SK-N-SH (cell line): ENCODE measurements at regions of chr17 and their contacts with region 1.

Region 1: GRCh38 chr17:1965556-1966273 is 59.4 kb downstream of the RTN4RL1 start:
- DNase-seq: no peak
- H3K4me3 ChIP-seq: no peak overlapping the region
- H3K27ac ChIP-seq: no peak overlapping the region
- H3K4me1 ChIP-seq: peaks cover 0 to 14% of the 10 kb centered on the region in 2 experiments; a peak in 1 of 4 replicates
- H3K27me3 ChIP-seq: no peaks in the 10 kb centered on the region
- CTCF ChIP-seq: no peak
- EP300 ChIP-seq: no peak
- RAD21 ChIP-seq: no peak

Region 2: DNA sequence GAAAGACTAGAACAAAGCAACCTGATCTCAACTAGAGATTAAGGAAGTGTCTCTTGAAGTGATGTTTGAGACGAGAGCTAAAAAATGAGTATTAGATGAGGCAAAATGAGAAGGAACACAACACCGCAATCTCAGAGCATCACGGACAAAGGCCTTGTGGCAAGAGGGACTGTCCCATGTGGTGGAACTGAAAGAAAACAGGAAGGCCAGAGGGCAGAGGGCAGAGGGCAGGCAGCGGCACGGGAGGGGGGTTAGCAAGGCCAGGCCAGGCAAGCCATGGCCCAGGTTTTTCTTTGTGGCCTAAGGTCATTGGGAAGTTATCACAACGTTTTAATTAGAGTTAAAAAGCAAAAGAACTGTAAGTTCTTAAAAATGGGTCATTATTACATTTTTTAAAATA is 113.4 kb before region 1 on chr17:
- CTCF ChIA-PET with region 1: no interaction called
- POLR2A ChIA-PET with region 1: no interaction called
- DNase-seq: no peak
- H3K4me3 ChIP-seq: no peak overlapping the region
- H3K27ac ChIP-seq: no peak overlapping the region
- H3K4me1 ChIP-seq: no peaks in the 10 kb centered on the region
- H3K27me3 ChIP-seq: no peaks in the 10 kb centered on the region
- CTCF ChIP-seq: no peak
- EP300 ChIP-seq: no peak
- RAD21 ChIP-seq: no peak

Region 3: GRCh38 chr17:2238432-2239169 is 272.9 kb after region 1 on chr17:
- CTCF ChIA-PET with region 1: no interaction called
- POLR2A ChIA-PET with region 1: interaction called, 12 read pairs
- DNase-seq: no peak
- H3K4me3 ChIP-seq: no peak overlapping the region
- H3K27ac ChIP-seq: peak overlapping the region; percentile 40 to 93
- H3K4me1 ChIP-seq: peaks cover 8 to 29% of the 10 kb centered on the region in 2 experiments; a peak in 3 of 4 replicates
- H3K27me3 ChIP-seq: no peaks in the 10 kb centered on the region
- CTCF ChIP-seq: no peak
- EP300 ChIP-seq: no peak
- RAD21 ChIP-seq: no peak